Right cardiac atrium (tissue), 5 donors: ENCODE measurements at regions of chr10 and their contacts with region 1.

Region 1: GRCh38 chr10:131083915-131084790 is 227.4 kb downstream of the TCERG1L start:
- DNase-seq: no peak
- ATAC-seq: no peak
- H3K4me3 ChIP-seq: no peak overlapping the region
- H3K27ac ChIP-seq: no peak overlapping the region
- H3K4me1 ChIP-seq: no peaks in the 10 kb centered on the region
- H3K27me3 ChIP-seq: no peaks in the 10 kb centered on the region

Region 2: GRCh38 chr10:130844310-130844709 is 239.8 kb before region 1 on chr10:
- intact Hi-C with region 1: no loop called
- DNase-seq: no peak
- ATAC-seq: no peak
- H3K4me3 ChIP-seq: no peak overlapping the region
- H3K27ac ChIP-seq: no peak overlapping the region
- H3K4me1 ChIP-seq: no peaks in the 10 kb centered on the region
- H3K27me3 ChIP-seq: no peaks in the 10 kb centered on the region

Region 3: DNA sequence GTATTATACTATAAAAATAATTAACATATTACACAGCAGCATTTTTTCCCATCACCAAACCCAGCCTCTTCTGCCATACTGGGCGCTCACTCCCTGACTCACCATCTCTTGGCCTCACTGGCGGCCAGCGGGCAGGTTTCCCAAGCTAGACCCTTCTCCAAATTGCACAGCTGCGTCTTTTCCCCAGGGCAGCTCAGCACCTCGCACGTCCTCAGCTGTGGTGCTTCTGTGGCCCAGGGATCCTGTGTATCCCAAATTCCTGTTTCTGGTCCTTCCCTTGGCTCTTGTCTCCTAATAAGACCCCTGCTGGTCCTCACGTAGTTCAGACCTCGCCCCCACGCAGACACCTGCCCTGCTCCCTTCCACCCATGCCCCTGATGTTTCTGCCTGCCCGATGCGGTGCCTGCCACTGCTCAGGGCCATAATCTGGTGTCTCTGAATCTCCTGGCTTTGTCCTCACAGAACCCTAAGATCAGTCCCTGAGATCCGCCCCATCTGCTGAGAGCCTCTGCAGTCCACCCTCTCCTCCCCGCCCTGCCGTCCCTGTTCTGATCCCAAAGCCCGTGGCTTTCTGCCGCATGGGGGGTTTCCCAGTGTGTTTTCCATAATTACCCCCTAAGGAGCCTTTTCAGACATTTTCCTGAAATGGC is 62.8 kb before region 1 on chr10:
- intact Hi-C with region 1: loop called in 1 of 4 experiments (anchors 10 kb)
- DNase-seq: peak in 2 of 3 donors; percentile 43 to 70
- ATAC-seq: peak in 1 of 2 donors; percentile 36
- H3K4me3 ChIP-seq: no peak overlapping the region
- H3K27ac ChIP-seq: no peak overlapping the region
- H3K4me1 ChIP-seq: no peaks in the 10 kb centered on the region
- H3K27me3 ChIP-seq: no peaks in the 10 kb centered on the region

Region 4: GRCh38 chr10:131049016-131049415 is 35.1 kb before region 1 on chr10:
- intact Hi-C with region 1: no loop called
- DNase-seq: no peak
- ATAC-seq: no peak
- H3K4me3 ChIP-seq: no peak overlapping the region
- H3K27ac ChIP-seq: no peak overlapping the region
- H3K4me1 ChIP-seq: no peaks in the 10 kb centered on the region
- H3K27me3 ChIP-seq: no peaks in the 10 kb centered on the region

Region 5: DNA sequence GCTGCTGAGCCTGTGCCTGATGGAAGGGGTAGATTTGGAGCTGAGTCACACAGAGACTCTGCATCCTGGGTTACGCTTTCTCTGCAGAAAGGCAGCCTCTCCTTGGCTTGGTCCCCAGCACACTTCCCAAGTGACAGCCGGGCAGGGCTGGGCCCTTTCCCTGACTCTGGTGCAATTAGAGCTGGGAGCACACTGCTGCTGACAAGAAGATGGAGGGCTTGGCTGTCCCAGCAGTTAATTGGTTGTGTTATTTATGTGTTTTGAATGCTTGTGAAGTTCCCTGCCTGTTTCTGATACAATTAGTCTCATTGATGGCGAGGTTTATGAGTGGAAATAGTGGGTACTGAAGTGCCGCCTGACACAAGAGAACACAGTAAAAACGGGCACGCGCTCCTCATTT is 103.8 kb after region 1 on chr10:
- intact Hi-C with region 1: no loop called
- DNase-seq: no peak
- ATAC-seq: no peak
- H3K4me3 ChIP-seq: no peak overlapping the region
- H3K27ac ChIP-seq: no peak overlapping the region
- H3K4me1 ChIP-seq: no peaks in the 10 kb centered on the region
- H3K27me3 ChIP-seq: no peaks in the 10 kb centered on the region